AG04450 (cell line): ENCODE measurements at regions of chr19 and their contacts with region 1.

Region 1: GRCh38 chr19:49640113-49640898 is at the start of gene RRAS:
- DNase-seq: peak; percentile 100
- H3K4me3 ChIP-seq: peak within 1 kb of the TSS; percentile 73
- H3K27ac ChIP-seq: peak within 1 kb of the TSS; percentile 100
- H3K27me3 ChIP-seq: no peaks in the 10 kb centered on the region
- CTCF ChIP-seq: no peak
- polyA plus RNA-seq, gene RRAS: 64.2 and 93.3 TPM in 2 replicates

Region 2: GRCh38 chr19:49590071-49590970 is 50.0 kb before region 1 on chr19:
- CTCF ChIA-PET with region 1: no interaction called
- POLR2A ChIA-PET with region 1: interaction called, 22 read pairs
- DNase-seq: peak; percentile 88
- H3K4me3 ChIP-seq: peak overlapping the region; percentile 78
- H3K27ac ChIP-seq: peak overlapping the region; percentile 68
- H3K27me3 ChIP-seq: no peaks in the 10 kb centered on the region
- CTCF ChIP-seq: 0 out of 2 replicates have a peak, but pooled peaks have one; percentile 3

Region 3: DNA sequence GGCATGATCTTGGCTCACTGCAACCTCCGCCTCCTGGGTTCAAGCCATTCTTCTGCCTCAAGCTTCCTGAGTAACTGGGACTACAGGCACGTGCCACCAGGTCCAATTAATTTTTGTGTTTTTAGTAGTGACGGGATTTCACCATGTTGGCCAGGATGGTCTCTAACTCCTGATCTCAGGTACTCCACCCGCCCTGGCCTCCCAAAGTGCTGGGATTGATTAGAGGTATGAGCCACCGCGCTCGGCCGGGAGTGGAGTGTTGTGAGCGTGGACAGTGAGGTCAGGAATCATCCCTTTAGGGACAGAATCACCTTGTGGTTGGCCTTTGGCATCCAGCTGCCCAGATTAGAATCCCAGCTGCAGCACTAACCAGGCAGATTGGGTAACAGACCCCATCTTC is 10.6 kb before region 1 on chr19:
- CTCF ChIA-PET with region 1: no interaction called
- POLR2A ChIA-PET with region 1: interaction called, 16 read pairs
- DNase-seq: no peak
- H3K4me3 ChIP-seq: no peak overlapping the region
- H3K27ac ChIP-seq: no peak overlapping the region
- H3K27me3 ChIP-seq: no peaks in the 10 kb centered on the region
- CTCF ChIP-seq: no peak